Mammary epithelial cell (primary cell): ENCODE measurements at regions of chr7 and their contacts with region 1.

Region 1: DNA sequence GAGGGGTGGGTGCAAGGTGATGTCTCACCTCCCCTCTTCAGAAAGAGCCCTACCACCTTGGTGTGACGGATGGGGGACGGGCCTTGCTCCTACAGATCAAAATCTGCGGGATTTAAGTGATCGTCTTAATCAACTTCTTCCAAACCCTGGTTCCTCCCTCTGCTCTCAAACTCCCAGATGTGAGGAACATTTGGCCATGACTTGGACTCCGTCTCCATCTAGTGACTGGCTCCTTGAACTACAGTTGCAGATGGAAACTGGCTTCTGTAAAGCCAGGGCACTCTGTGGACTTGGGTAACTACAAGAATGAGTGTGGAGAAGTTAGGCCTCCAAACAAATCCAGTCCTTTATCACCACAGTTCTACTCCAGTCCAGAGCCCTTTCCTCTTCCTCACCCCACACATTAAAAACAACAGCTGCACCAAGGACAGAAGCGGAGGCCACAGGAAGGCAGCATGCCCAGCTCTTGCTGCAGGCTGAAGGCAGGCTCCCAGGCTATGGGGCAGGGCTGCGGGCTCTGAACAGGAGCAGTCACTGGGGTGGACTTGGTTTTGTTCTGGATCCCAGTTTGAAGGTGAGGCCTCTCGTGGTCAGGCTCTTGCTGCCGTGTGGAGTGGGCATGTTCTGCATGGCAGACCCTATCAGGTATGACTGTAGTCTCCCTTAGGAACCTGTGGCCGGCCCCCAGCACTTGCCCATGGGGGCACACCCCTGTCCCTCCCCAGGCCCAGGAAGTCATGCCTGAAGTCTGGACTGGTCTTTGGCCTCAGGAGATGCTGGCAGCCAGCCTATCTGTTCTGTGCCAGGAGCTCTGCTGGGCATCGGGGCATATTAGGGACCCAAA is 79.4 kb downstream of the VWC2 start:
- DNase-seq: peak; percentile 61
- H3K4me3 ChIP-seq: no peak overlapping the region
- H3K27ac ChIP-seq: no peak overlapping the region
- H3K4me1 ChIP-seq: no peaks in the 10 kb centered on the region
- H3K27me3 ChIP-seq: no peaks in the 10 kb centered on the region
- CTCF ChIP-seq: peak; percentile 94 to 96

Region 2: GRCh38 chr7:47945261-47946001 is 1907.4 kb before region 1 on chr7:
- CTCF ChIA-PET with region 1: no interaction called
- dilution Hi-C with region 1: no loop called
- in situ Hi-C with region 1: no loop called
- intact Hi-C with region 1: loop called (anchors 10 kb)
- DNase-seq: peak; percentile 30
- H3K4me3 ChIP-seq: no peak overlapping the region
- H3K27ac ChIP-seq: no peak overlapping the region
- H3K4me1 ChIP-seq: peaks cover 16% of the 10 kb centered on the region
- H3K27me3 ChIP-seq: no peaks in the 10 kb centered on the region
- CTCF ChIP-seq: peak; percentile 66 to 74

Region 3: GRCh38 chr7:48384180-48384752 is 1468.6 kb before region 1 on chr7:
- CTCF ChIA-PET with region 1: no interaction called
- dilution Hi-C with region 1: no loop called
- in situ Hi-C with region 1: no loop called
- intact Hi-C with region 1: loop called (anchors 1 kb)
- DNase-seq: peak; percentile 69
- H3K4me3 ChIP-seq: no peak overlapping the region
- H3K27ac ChIP-seq: no peak overlapping the region
- H3K4me1 ChIP-seq: peaks cover 7% of the 10 kb centered on the region
- H3K27me3 ChIP-seq: no peaks in the 10 kb centered on the region
- CTCF ChIP-seq: peak; percentile 21 to 53

Region 4: DNA sequence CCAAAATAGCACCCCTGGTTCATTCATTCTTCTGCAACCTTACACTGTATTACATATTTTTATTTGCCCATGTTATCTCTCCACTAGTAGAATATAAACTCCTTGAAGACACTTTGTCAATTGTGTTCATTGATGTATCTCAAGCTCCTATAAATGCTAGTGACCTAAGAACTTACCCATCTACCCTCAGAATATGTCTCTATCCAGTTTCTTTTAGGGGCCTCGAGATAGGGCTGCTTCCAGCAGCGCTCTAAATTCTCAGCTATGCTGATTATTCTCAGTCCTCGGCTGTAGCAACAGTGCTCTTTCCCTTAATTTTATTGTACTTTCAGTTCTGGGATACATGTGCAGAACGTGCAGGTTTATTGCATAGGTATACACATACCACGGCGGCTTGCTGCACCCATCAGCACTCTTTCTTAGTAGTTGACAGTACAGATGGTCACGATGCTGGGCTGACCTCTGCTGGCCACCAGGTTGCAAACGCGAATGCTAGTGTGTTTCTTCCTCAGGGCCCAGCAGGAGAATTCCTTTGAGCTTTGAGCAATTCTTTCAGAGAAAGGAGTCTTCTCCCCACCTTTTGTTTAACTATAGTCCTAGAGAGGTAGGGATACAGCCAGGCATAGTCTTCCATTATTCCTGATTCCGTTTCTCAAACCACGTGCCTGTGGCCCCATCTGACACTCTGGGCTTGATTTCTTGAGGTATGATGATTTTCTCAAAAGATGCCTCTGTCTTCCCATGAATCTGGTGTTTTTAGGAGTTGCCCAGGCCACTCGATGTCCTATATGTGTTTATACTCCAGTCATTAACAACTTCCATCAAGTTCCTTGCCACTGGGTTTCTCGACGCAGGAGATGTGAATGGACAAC is 977.6 kb before region 1 on chr7:
- CTCF ChIA-PET with region 1: no interaction called
- dilution Hi-C with region 1: no loop called
- in situ Hi-C with region 1: no loop called
- intact Hi-C with region 1: loop called (anchors 5 kb)
- DNase-seq: peak; percentile 41
- H3K4me3 ChIP-seq: no peak overlapping the region
- H3K27ac ChIP-seq: no peak overlapping the region
- H3K4me1 ChIP-seq: no peaks in the 10 kb centered on the region
- H3K27me3 ChIP-seq: no peaks in the 10 kb centered on the region
- CTCF ChIP-seq: peak; percentile 68 to 88

Region 5: DNA sequence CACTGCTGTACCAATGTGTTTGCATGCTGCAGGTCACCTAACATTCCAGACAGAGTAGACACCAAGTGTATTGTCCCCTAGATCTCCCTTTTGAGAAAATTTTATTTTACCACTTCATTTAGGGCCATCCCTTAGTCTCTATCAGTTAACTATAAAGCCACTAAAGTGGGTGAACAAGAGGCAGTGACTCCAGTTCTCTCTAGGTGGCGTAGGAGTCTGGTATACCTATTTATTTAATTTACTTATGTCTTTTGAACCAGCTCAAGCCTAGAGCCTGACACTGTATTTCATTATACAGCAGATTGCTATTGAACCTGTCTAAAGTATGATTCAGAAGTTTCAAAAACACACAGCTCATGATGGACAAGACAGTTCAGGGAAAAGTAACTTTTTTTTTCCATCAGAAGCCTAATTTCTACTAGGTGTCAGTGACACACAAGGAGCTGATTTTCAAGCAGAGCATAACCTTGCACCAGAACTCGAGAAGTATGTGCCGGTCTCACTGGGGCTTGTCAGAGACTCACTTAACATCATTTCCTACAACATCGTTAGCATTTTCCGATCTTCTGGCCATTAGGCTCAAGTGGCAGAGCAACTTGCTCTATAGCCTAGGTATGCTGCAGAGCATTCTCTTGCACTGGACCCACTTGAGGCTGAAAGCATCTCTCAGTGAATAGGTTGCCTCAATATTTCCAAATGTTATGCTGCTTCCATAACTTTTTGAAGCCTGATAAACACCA is 753.1 kb before region 1 on chr7:
- CTCF ChIA-PET with region 1: no interaction called
- dilution Hi-C with region 1: no loop called
- in situ Hi-C with region 1: no loop called
- intact Hi-C with region 1: loop called (anchors 5 kb)
- DNase-seq: no peak
- H3K4me3 ChIP-seq: no peak overlapping the region
- H3K27ac ChIP-seq: no peak overlapping the region
- H3K4me1 ChIP-seq: no peaks in the 10 kb centered on the region
- H3K27me3 ChIP-seq: no peaks in the 10 kb centered on the region
- CTCF ChIP-seq: peak; percentile 20 to 57

Region 6: DNA sequence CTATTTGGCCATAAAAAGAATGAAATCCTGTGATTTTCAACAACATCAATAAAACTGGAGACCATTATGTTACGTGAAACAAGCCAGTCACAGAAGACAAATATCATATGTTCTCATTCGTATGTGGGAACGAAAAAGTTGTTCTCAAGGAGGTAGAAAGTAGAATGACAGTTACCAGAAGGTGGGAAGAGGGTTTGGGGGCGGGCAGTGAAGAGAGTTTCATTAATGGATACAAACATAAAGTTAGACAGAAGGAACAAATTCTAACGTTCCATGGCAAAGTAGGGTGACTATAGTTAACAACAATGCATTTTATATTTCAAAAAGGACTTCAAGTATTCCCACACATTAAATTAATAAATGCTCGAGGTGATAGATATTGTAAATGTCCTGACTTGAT is 142.8 kb after region 1 on chr7:
- CTCF ChIA-PET with region 1: no interaction called
- dilution Hi-C with region 1: no loop called
- in situ Hi-C with region 1: no loop called
- intact Hi-C with region 1: no loop called
- DNase-seq: no peak
- H3K4me3 ChIP-seq: no peak overlapping the region
- H3K27ac ChIP-seq: no peak overlapping the region
- H3K4me1 ChIP-seq: no peaks in the 10 kb centered on the region
- H3K27me3 ChIP-seq: no peaks in the 10 kb centered on the region
- CTCF ChIP-seq: no peak